Activated T-helper 2 cell treated with anti-CD3 and anti-CD28 coated beads, Interferon-gamma antibody, Interleukin-2, Interleukin-4, amounts not matched to agents 10 μg/mL and 5 μg/mL and 100 μg/mL, durations not matched to agents 14 hours and 24 hours and 36 hours (primary cell): ENCODE measurements at regions of chr12 and their contacts with region 1.

Region 1: DNA sequence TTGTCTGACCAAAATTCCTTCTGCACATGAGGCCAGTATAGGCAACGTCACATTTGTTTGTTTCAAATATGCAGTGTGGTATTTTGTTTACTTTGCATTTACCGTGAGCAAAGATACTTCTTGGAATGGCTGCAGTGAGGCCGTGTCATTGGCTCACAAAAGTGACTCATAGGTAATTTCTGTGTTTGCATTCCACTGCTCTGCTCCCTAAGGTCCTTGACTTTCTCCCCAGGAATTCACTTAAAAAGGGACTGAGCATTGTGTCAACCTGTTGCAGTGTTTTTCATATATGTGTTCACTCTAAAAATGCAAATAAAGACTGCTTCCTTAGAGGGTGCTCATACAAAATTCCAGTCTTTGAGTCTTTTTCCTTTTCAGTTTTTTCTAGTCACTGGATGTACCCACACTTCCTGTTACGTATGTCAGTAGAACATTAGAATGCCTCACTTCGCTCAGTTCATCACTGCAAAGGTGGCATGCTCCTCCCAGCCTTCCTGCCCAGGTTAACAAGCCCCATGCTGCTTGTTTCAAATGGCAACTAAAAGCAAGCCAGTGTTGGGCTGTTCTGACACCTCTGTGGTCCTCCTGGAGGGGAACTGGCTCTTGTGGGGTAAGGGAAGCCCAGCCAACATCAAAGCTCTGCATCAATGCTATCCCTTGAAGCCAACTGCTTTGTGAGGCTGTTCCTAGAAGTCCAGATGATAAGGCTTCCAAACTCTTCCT is 9.1 kb downstream of the C12orf76 start:
- DNase-seq: no peak
- H3K4me3 Mint-ChIP-seq: no peak overlapping the region
- H3K27ac Mint-ChIP-seq: peak overlapping the region; percentile 92
- H3K4me1 Mint-ChIP-seq: peaks cover 49% of the 10 kb centered on the region
- H3K27me3 Mint-ChIP-seq: no peaks in the 10 kb centered on the region

Region 2: DNA sequence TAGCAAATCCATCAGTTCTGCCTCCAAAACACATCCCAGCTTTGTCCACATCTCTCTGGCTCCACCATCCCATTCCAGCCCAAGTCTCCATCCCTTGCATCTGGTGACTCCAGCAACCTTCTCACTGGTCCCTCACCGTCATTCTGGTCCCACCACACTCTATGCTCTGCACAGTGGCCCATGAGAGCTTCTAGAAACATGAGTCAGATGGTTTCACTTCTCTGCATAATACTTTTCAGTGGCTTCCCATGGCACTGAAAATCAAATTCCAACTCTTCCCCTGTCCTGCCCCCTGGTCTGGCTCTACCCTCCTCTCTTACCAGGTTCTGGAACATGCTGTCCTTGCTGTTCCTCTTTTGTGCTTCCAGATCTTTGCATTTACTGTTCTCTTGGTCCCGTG is 26.3 kb after region 1 on chr12:
- intact Hi-C with region 1: loop called (anchors 1 kb)
- DNase-seq: no peak
- H3K4me3 Mint-ChIP-seq: no peak overlapping the region
- H3K27ac Mint-ChIP-seq: peak overlapping the region; percentile 47
- H3K4me1 Mint-ChIP-seq: peaks cover 37% of the 10 kb centered on the region
- H3K27me3 Mint-ChIP-seq: no peaks in the 10 kb centered on the region

Region 3: DNA sequence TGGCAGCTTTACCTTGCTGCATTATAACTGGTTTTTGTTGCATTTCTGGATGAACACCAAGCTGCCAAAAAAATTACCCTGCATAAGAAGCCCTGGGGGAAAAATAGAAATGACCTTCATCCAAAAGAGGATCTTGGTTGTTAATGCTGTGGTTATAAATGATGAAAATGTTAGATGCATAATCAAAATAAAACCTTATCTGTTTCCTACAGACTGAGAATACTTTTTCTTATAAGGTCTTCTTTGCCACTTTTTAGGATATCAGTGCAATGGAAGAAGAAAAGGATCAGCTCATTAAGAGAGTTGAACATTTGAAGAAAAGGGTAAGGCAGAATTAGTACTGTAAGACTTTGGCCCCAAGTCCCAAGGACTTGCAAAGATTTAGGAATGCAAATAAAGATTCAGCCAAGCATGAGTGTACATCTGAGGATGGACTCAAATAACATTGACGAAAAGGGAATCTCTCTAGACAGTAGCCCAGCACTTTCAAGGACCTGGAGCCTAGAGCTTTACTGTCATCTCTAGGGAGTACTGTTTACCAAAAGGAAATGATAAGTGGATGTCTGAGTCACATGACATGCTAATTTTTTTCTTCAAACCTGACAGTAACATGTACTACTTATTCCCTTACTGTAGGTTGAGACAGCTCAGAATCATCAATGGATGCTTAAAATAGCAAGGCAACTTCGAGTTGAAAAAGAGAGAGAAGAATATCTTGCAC is 95.6 kb after region 1 on chr12:
- intact Hi-C with region 1: no loop called
- DNase-seq: no peak
- H3K4me3 Mint-ChIP-seq: no peak overlapping the region
- H3K27ac Mint-ChIP-seq: no peak overlapping the region
- H3K4me1 Mint-ChIP-seq: peaks cover 4% of the 10 kb centered on the region
- H3K27me3 Mint-ChIP-seq: no peaks in the 10 kb centered on the region